Vagina (tissue), 2 donors: ENCODE measurements at regions of chr17 and their contacts with region 1.

Region 1: DNA sequence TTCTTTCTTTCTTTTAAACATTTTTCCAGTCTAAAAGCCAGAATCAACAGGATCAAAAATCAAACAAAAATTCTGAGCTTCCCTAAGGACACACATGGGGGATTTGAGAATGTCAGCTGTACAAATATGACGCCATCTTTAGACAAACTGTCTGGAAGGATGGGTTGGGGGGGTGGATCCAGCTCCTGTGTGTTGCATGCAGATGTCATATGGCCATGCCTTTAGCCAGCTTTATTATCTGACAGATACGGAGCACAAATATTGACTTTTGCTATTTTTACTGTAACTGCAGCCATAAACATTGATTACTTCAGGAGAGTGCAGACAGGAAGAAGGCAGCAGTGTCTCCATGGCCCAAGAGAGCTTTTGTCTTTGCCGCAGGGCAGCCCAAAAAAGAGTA is 279.4 kb upstream of the ELAC2 start:
- DNase-seq: no peak
- H3K4me3 ChIP-seq: no peak overlapping the region
- H3K27ac ChIP-seq: no peak overlapping the region
- H3K4me1 ChIP-seq: no peaks in the 10 kb centered on the region
- H3K27me3 ChIP-seq: no peaks in the 10 kb centered on the region
- CTCF ChIP-seq: no peak
- POLR2A ChIP-seq: no peak

Region 2: DNA sequence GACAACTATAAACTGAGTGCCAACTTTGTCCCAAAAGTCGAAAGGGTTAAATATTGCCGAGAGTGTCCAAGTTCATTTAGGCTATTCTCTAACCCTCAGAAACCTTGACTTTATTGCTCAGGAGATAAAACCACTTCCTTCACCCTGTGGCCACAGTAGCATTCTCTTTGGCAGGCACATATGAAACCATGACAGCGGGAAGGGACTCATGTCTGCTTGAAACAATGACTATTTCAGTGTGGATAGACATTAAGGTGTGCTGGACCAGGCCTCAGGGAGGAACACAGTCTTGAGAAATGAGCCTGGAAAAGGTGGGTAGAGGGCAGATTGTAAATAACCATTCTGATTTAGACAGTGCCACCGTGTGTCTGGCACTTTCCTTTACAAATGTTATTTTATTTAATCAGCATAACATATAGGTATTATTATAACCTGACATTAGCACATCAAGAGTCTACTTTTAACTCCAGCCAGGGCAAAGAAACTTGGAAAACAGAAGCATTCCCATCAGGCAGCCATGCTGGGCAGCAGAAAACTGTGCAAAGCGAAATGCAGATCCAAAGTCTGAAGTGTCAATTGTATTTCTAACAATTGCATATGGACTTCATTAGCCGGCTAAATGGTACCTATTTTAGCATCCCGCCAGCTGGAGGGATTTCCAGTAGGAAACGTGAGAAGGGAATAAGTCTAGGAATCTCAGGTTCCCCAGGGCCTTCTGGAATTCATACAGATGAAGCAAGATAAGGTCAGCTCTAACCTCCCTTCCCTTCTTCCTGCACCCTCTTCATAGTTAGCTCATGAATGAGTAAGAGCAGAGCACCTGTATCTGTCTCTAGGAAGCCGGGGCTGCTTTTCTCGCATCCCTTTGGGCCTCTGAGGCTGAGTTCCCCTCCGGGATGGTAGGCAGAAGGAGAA is 66.6 kb before region 1 on chr17:
- intact Hi-C with region 1: loop called (anchors 10 kb)
- DNase-seq: no peak
- H3K4me3 ChIP-seq: no peak overlapping the region
- H3K27ac ChIP-seq: no peak overlapping the region
- H3K4me1 ChIP-seq: no peaks in the 10 kb centered on the region
- H3K27me3 ChIP-seq: no peaks in the 10 kb centered on the region
- CTCF ChIP-seq: no peak
- POLR2A ChIP-seq: no peak